Naive thymus-derived CD4-positive, alpha-beta T cell (primary cell): ENCODE measurements at regions of chr22 and their contacts with region 1.

Region 1: GRCh38 chr22:24555157-24556039 is at the start of gene SNRPD3:
- DNase-seq: peak; percentile 89 to 99 (median 96)
- ATAC-seq: peak; percentile 92
- H3K4me3 ChIP-seq: peak within 1 kb of the TSS; percentile 98
- H3K4me3 Mint-ChIP-seq: peak within 1 kb of the TSS; percentile 90 to 100 (median 98)
- H3K27ac ChIP-seq: peak within 1 kb of the TSS; percentile 92
- H3K27ac Mint-ChIP-seq: peak within 1 kb of the TSS; percentile 93 to 100 (median 98)
- H3K4me1 ChIP-seq: peaks cover 20 to 38% of the 10 kb centered on the region in 2 donors
- H3K4me1 Mint-ChIP-seq: peaks cover 39 to 80% (median 70%) of the 10 kb centered on the region in 7 donors
- H3K27me3 ChIP-seq: no peaks in the 10 kb centered on the region
- H3K27me3 Mint-ChIP-seq: no peaks in the 10 kb centered on the region
- total RNA-seq, gene SNRPD3: 47.5 to 94.5 (median 73.9) TPM

Region 2: DNA sequence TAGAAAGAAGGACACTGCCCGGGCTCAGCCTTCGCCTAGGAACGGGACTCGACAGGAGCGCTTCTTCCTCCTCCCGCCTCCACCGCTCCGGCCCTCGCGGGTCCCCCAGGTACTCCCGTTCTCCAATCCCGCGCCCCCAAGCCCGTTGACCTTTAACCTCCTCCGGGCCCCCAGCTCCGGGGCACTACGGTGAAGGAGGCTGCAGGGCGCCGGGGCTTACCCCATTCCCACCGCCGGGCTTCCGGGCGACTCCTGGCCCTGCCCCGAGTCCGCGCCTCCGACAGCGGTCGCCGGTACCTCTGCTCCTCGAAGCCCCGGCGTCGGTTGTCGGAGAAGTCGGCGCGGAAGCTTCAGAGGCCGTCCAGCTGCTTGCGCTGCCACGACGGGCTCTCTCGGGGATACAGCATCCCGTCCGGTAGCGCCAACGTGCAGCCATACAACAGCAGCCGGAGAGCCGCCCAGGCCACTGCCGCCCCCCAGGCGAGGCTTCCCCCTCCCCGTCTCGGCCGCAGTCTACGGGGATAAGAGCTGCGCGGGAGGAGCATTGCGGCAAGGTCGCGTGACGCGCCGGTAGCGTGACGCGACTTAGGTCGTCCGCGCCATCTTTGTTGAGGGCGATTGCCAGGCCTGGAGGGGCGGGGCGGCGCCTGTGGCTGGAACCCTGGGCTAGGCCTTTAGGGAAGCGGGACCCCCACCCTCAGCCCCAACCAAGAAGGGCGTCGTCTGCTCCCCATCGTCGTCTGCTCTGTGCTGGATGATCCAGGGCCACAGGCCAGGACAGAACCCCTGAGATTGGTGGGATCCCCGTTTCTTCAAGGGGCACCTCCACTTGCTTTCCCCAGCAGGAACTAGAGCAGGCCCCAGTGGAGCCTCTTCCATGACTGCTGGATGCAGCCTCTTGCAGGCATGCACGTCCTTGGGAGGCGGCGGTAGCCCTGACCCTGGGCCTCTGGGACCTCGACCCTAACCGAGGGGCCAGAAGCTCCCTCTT is 838.3 kb before region 1 on chr22:
- CTCF ChIA-PET with region 1: no interaction called
- POLR2A ChIA-PET with region 1: no interaction called
- intact Hi-C with region 1: loop called in 1 of 2 experiments (anchors 10 kb)
- DNase-seq: peak; percentile 72 to 85 (median 81)
- ATAC-seq: peak; percentile 97
- H3K4me3 ChIP-seq: peak overlapping the region; percentile 71
- H3K4me3 Mint-ChIP-seq: peak overlapping the region; percentile 78 to 88 (median 81)
- H3K27ac ChIP-seq: peak overlapping the region; percentile 89
- H3K27ac Mint-ChIP-seq: peak overlapping the region; percentile 8 to 93 (median 86)
- H3K4me1 ChIP-seq: peaks cover 10 to 12% of the 10 kb centered on the region in 2 donors
- H3K4me1 Mint-ChIP-seq: peaks cover 12 to 24% (median 16%) of the 10 kb centered on the region in 7 donors
- H3K27me3 ChIP-seq: no peaks in the 10 kb centered on the region
- H3K27me3 Mint-ChIP-seq: no peaks in the 10 kb centered on the region

Region 3: GRCh38 chr22:23838681-23839468 is 716.5 kb before region 1 on chr22 and contains the start of gene DERL3:
- CTCF ChIA-PET with region 1: no interaction called
- POLR2A ChIA-PET with region 1: no interaction called
- intact Hi-C with region 1: loop called in 1 of 2 experiments (anchors 1 kb)
- DNase-seq: peak; percentile 80 to 97 (median 92)
- ATAC-seq: peak; percentile 94
- H3K4me3 ChIP-seq: peak within 1 kb of the TSS; percentile 70
- H3K4me3 Mint-ChIP-seq: peak within 1 kb of the TSS; percentile 81 to 96 (median 93)
- H3K27ac ChIP-seq: peak within 1 kb of the TSS; percentile 51
- H3K27ac Mint-ChIP-seq: peak within 1 kb of the TSS; percentile 43 to 97 (median 87)
- H3K4me1 ChIP-seq: peaks cover 4 to 5% of the 10 kb centered on the region in 2 donors
- H3K4me1 Mint-ChIP-seq: peaks cover 12 to 26% (median 20%) of the 10 kb centered on the region in 7 donors
- H3K27me3 ChIP-seq: no peaks in the 10 kb centered on the region
- H3K27me3 Mint-ChIP-seq: peaks cover 0 to 7% (median 0%) of the 10 kb centered on the region in 5 donors
- total RNA-seq, gene DERL3: 1.6 to 16.2 (median 6.5) TPM

Region 4: DNA sequence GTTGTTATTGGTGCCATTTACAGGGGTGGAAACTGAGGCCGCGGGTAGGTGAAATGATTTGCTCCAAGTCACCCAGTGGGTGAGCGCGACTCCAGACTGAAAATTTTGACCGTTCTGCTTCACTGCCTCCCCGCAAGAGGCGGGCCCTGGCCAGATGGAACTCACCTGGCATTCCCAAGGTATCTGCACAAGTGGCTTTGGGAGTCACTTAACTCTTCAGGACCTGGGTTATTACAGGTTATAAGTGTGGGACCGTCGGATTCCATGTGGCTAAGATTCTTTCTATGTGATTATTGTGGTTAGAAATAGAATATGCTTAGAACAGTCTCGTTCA is 543.7 kb before region 1 on chr22:
- CTCF ChIA-PET with region 1: no interaction called
- POLR2A ChIA-PET with region 1: no interaction called
- intact Hi-C with region 1: loop called (anchors 1 to 10 kb)
- DNase-seq: peak in 2 of 9 donors; percentile 10 to 19
- ATAC-seq: no peak
- H3K4me3 ChIP-seq: peak overlapping the region; percentile 75
- H3K4me3 Mint-ChIP-seq: peak overlapping the region; percentile 88 to 98 (median 96)
- H3K27ac ChIP-seq: peak overlapping the region; percentile 78
- H3K27ac Mint-ChIP-seq: peak overlapping the region; percentile 93 to 99 (median 97)
- H3K4me1 ChIP-seq: peaks cover 4 to 10% of the 10 kb centered on the region in 2 donors
- H3K4me1 Mint-ChIP-seq: peaks cover 12 to 52% (median 39%) of the 10 kb centered on the region in 7 donors
- H3K27me3 ChIP-seq: no peaks in the 10 kb centered on the region
- H3K27me3 Mint-ChIP-seq: no peaks in the 10 kb centered on the region

Region 5: DNA sequence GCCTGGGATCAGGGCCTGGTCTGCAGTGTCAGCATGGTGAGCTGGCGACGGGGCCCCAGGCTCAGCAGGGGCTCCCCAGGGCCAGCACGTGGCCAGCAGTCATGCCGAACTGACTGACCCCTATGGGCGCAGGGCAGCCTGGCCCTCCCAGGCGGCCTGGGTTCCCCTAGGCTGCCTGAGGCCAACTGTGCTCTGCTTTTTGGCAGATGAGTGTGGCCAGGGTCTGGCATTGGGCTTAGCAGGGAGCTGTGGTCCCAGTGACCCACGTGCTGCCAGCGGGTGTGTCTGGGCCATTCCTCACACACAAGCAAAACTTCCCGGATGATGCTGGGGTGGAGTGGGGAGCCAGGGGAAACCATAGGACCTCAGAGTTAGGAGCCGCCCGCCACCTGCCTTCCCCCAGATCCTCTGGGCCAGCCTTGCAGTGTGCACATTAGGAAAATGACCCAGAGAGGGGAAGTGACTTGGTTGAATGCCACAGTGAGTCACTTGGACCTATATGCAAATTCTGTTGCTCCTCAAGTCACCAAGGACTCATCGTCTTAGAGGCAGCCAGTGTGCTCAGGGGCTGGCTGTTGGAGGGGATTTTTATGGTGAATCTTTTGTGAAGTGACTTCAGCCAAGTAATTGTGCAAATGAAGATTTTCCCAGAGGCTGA is 121.5 kb before region 1 on chr22:
- CTCF ChIA-PET with region 1: no interaction called
- POLR2A ChIA-PET with region 1: interaction called, 12 read pairs
- intact Hi-C with region 1: loop called in 1 of 2 experiments (anchors 1 kb)
- DNase-seq: no peak
- ATAC-seq: peak; percentile 75
- H3K4me3 ChIP-seq: peak overlapping the region; percentile 7
- H3K4me3 Mint-ChIP-seq: peak overlapping the region; percentile 73 to 84 (median 78)
- H3K27ac ChIP-seq: peak overlapping the region; percentile 97
- H3K27ac Mint-ChIP-seq: peak overlapping the region; percentile 85 to 97 (median 94)
- H3K4me1 ChIP-seq: peaks cover 87 to 88% of the 10 kb centered on the region in 2 donors
- H3K4me1 Mint-ChIP-seq: peaks cover 48 to 95% (median 86%) of the 10 kb centered on the region in 7 donors
- H3K27me3 ChIP-seq: no peaks in the 10 kb centered on the region
- H3K27me3 Mint-ChIP-seq: no peaks in the 10 kb centered on the region

Region 6: GRCh38 chr22:24683671-24684070 is 128.3 kb after region 1 on chr22:
- CTCF ChIA-PET with region 1: no interaction called
- POLR2A ChIA-PET with region 1: no interaction called
- intact Hi-C with region 1: no loop called
- DNase-seq: no peak
- ATAC-seq: no peak
- H3K4me3 ChIP-seq: no peak overlapping the region
- H3K4me3 Mint-ChIP-seq: no peak overlapping the region
- H3K27ac ChIP-seq: no peak overlapping the region
- H3K27ac Mint-ChIP-seq: no peak overlapping the region
- H3K4me1 ChIP-seq: no peaks in the 10 kb centered on the region
- H3K4me1 Mint-ChIP-seq: peaks cover 0 to 4% (median 0%) of the 10 kb centered on the region in 7 donors
- H3K27me3 ChIP-seq: peaks cover 0 to 10% of the 10 kb centered on the region in 2 donors
- H3K27me3 Mint-ChIP-seq: peaks cover 37 to 68% (median 47%) of the 10 kb centered on the region in 5 donors

Region 7: GRCh38 chr22:24707470-24707801 is 152.0 kb after region 1 on chr22:
- CTCF ChIA-PET with region 1: no interaction called
- POLR2A ChIA-PET with region 1: no interaction called
- intact Hi-C with region 1: no loop called
- DNase-seq: no peak
- ATAC-seq: no peak
- H3K4me3 ChIP-seq: no peak overlapping the region
- H3K4me3 Mint-ChIP-seq: no peak overlapping the region
- H3K27ac ChIP-seq: no peak overlapping the region
- H3K27ac Mint-ChIP-seq: no peak overlapping the region
- H3K4me1 ChIP-seq: no peaks in the 10 kb centered on the region
- H3K4me1 Mint-ChIP-seq: peaks cover 0 to 1% (median 0%) of the 10 kb centered on the region in 7 donors
- H3K27me3 ChIP-seq: no peaks in the 10 kb centered on the region
- H3K27me3 Mint-ChIP-seq: peaks cover 5 to 14% (median 13%) of the 10 kb centered on the region in 5 donors

Region 8: GRCh38 chr22:25067851-25068421 is 512.5 kb after region 1 on chr22:
- CTCF ChIA-PET with region 1: no interaction called
- POLR2A ChIA-PET with region 1: interaction called, 5 read pairs
- intact Hi-C with region 1: loop called in 1 of 2 experiments (anchors 10 kb)
- DNase-seq: peak; percentile 56 to 95 (median 92)
- ATAC-seq: peak; percentile 94
- H3K4me3 ChIP-seq: peak overlapping the region; percentile 43
- H3K4me3 Mint-ChIP-seq: peak overlapping the region; percentile 81 to 94 (median 87)
- H3K27ac ChIP-seq: peak overlapping the region; percentile 76
- H3K27ac Mint-ChIP-seq: peak overlapping the region; percentile 86 to 99 (median 98)
- H3K4me1 ChIP-seq: peaks cover 63 to 67% of the 10 kb centered on the region in 2 donors
- H3K4me1 Mint-ChIP-seq: peaks cover 51 to 96% (median 89%) of the 10 kb centered on the region in 7 donors
- H3K27me3 ChIP-seq: no peaks in the 10 kb centered on the region
- H3K27me3 Mint-ChIP-seq: no peaks in the 10 kb centered on the region